PC-9 (cell line): ENCODE measurements at regions of chr12 and their contacts with region 1.

Region 1: DNA sequence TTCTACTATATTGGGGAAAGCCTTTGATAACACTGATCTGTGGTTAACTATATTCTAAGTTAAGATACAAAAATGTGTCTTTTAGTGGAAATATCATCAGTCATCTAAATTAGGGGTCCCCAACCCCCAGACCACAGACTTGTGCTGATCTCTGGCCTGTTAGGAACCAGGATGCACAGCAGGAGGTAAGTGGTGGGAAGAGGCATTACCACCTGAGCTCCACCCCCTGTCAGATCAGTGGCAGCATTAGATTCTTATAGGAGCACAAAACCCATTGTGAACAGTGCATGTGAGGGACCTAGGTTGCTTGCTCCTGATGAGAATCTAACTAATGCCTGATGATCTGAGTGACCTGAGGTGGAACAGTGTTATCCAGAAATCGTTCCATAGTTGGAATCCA is 28.3 kb upstream of the LIN7A start:
- DNase-seq: no peak
- H3K4me3 ChIP-seq: no peak overlapping the region
- H3K27ac ChIP-seq: no peak overlapping the region
- H3K4me1 ChIP-seq: no peaks in the 10 kb centered on the region
- H3K27me3 ChIP-seq: no peaks in the 10 kb centered on the region
- CTCF ChIP-seq: no peak

Region 2: GRCh38 chr12:80282761-80283160 is 683.2 kb before region 1 on chr12:
- CTCF ChIA-PET with region 1: no interaction called
- POLR2A ChIA-PET with region 1: interaction called, 10 read pairs
- intact Hi-C with region 1: no loop called
- DNase-seq: no peak
- H3K4me3 ChIP-seq: no peak overlapping the region
- H3K27ac ChIP-seq: no peak overlapping the region
- H3K4me1 ChIP-seq: no peaks in the 10 kb centered on the region
- H3K27me3 ChIP-seq: no peaks in the 10 kb centered on the region
- CTCF ChIP-seq: no peak